ENCODE measurements at regions of chr6 and their contacts with region 1.

Region 1: GRCh38 chr6:46781478-46782378 is 11.5 kb upstream of the MEP1A start:
- DNase-seq: peak in 1 of 2 donors; percentile 63
- ATAC-seq: no peak
- H3K4me3 ChIP-seq: no peak overlapping the region
- H3K27ac ChIP-seq: no peak overlapping the region
- H3K4me1 ChIP-seq: no peaks in the 10 kb centered on the region
- H3K27me3 ChIP-seq: no peaks in the 10 kb centered on the region
- CTCF ChIP-seq: peak; percentile 43 to 81 (median 71)

Region 2: DNA sequence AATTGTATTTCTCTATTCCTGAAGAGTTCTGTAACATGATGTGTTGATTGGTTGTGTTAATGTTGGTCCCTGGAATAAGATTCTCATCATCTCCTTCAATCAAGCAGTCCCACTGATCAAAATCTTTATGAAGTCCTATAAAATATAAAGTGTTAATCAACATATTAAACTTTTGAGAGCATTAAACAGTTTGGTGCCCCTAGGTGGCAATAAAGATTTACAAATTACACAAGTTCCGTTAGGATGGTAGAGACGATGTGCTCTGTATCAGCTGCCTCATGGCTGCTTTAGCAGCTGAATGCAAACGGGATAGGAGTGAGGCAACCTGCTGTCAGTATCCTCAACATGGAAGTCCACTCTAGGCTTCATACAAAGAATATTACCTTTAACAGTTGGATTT is 77.2 kb before region 1 on chr6:
- intact Hi-C with region 1: loop called in 6 of 10 experiments (anchors 5 to 10 kb)
- DNase-seq: no peak
- ATAC-seq: peak in 3 of 8 donors; percentile 47 to 58 (median 57)
- H3K4me3 ChIP-seq: no peak overlapping the region
- H3K27ac ChIP-seq: no peak overlapping the region
- H3K4me1 ChIP-seq: no peaks in the 10 kb centered on the region
- H3K27me3 ChIP-seq: no peaks in the 10 kb centered on the region
- CTCF ChIP-seq: peak in 6 of 9 donors; percentile 16 to 36 (median 32)

Region 3: DNA sequence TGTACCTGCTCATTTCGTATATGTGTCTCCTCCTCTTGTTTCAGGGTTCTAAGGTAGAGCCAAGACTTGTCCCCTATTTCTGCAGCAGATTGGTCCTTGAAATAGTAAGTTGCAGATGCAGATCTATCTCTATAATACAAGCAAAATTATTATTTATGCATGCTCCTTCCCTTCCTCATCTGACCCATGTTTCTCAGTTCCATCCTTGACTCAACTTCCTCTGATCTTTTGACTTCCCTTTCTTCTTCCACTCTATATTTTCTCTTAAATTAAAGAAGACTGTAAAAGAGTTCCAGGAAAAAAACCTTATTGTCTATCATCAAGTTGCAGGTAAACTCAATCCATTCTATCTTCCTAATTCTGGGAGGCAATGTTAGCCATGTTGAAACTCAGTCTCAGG is 70.2 kb before region 1 on chr6:
- intact Hi-C with region 1: loop called in 5 of 10 experiments (anchors 5 to 10 kb)
- DNase-seq: no peak
- ATAC-seq: no peak
- H3K4me3 ChIP-seq: no peak overlapping the region
- H3K27ac ChIP-seq: no peak overlapping the region
- H3K4me1 ChIP-seq: peaks cover 0 to 13% (median 0%) of the 10 kb centered on the region in 9 donors
- H3K27me3 ChIP-seq: peaks cover 0 to 4% (median 0%) of the 10 kb centered on the region in 7 donors
- CTCF ChIP-seq: no peak

Measured in heart right ventricle (tissue), 16 donors.